Aorta (tissue), 5 donors: ENCODE measurements at regions of chr9 and their contacts with region 1.

Region 1: GRCh38 chr9:115900699-115901098 is 252.9 kb upstream of the PAPPA start:
- DNase-seq: no peak
- ATAC-seq: no peak
- H3K4me3 ChIP-seq: no peak overlapping the region
- H3K27ac ChIP-seq: no peak overlapping the region
- H3K4me1 ChIP-seq: no peaks in the 10 kb centered on the region
- H3K27me3 ChIP-seq: no peaks in the 10 kb centered on the region

Region 2: DNA sequence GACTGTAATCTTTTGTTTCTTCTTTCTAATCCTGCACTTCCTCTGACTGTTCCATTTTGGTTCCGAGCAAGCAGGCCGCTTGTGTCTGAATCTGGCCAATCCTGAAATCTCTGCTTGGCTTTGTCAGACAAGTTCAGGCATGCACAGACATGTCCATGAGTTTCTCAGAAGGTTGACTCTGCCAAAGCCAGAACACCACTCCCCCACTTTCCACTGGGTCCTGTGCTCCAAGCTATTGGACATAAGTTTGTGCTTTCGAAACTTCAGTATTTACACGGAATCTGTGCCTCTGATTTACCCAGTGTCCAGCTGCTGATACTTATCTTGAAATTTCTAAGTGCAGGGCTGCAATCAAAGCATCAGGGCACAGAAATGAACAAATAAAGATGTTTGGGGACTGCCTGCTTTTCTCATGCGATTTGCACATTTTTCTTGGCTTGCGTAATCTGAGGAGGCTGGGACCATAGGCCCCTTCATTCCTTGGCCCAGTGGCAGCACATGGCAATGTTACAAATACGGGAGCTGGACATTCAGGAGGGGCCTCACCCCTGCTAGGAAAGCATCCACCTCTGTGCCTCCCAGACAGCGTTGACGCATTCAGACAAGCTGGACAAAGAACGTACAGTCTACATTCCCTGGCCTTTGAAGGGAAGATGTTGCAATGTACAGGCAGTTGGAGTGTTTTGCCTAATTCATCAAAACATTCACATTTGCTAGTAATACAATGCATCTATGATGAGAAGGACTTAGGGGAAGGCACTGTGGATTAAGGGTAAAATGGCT is 43.7 kb after region 1 on chr9:
- intact Hi-C with region 1: loop called in 1 of 2 experiments (anchors 5 kb)
- DNase-seq: peak; percentile 83 to 87
- ATAC-seq: peak; percentile 91
- H3K4me3 ChIP-seq: no peak overlapping the region
- H3K27ac ChIP-seq: peak overlapping the region; percentile 84 to 86
- H3K4me1 ChIP-seq: peaks cover 3 to 6% of the 10 kb centered on the region in 2 donors
- H3K27me3 ChIP-seq: no peaks in the 10 kb centered on the region

Region 3: GRCh38 chr9:115978659-115979096 is 78.0 kb after region 1 on chr9:
- intact Hi-C with region 1: no loop called
- DNase-seq: no peak
- ATAC-seq: no peak
- H3K4me3 ChIP-seq: no peak overlapping the region
- H3K27ac ChIP-seq: no peak overlapping the region
- H3K4me1 ChIP-seq: no peaks in the 10 kb centered on the region
- H3K27me3 ChIP-seq: no peaks in the 10 kb centered on the region